Natural killer cell (primary cell): ENCODE measurements at regions of chr1 and their contacts with region 1.

Region 1: GRCh38 chr1:160755911-160756848 is 17.1 kb downstream of the SLAMF7 start:
- DNase-seq: peak; percentile 50 to 81
- ATAC-seq: peak; percentile 72 to 87 (median 85)
- H3K4me3 ChIP-seq: no peak overlapping the region
- H3K4me3 Mint-ChIP-seq: peak overlapping the region; percentile 65
- H3K27ac ChIP-seq: peak overlapping the region; percentile 93
- H3K27ac Mint-ChIP-seq: peak overlapping the region; percentile 95 to 96
- H3K4me1 ChIP-seq: peaks cover 57% of the 10 kb centered on the region
- H3K4me1 Mint-ChIP-seq: peaks cover 73% of the 10 kb centered on the region in 2 donors
- H3K27me3 ChIP-seq: no peaks in the 10 kb centered on the region
- H3K27me3 Mint-ChIP-seq: no peaks in the 10 kb centered on the region
- CTCF ChIP-seq: no peak

Region 2: GRCh38 chr1:160733898-160734297 is 22.3 kb before region 1 on chr1:
- intact Hi-C with region 1: loop called (anchors 1 kb)
- DNase-seq: peak in 1 of 2 donors; percentile 37
- ATAC-seq: peak in 1 of 3 donors; percentile 37
- H3K4me3 ChIP-seq: no peak overlapping the region
- H3K4me3 Mint-ChIP-seq: peak overlapping the region; percentile 65
- H3K27ac ChIP-seq: peak overlapping the region; percentile 75
- H3K27ac Mint-ChIP-seq: peak overlapping the region; percentile 88 to 96
- H3K4me1 ChIP-seq: peaks cover 10% of the 10 kb centered on the region
- H3K4me1 Mint-ChIP-seq: peaks cover 52 to 68% of the 10 kb centered on the region in 2 donors
- H3K27me3 ChIP-seq: no peaks in the 10 kb centered on the region
- H3K27me3 Mint-ChIP-seq: no peaks in the 10 kb centered on the region
- CTCF ChIP-seq: no peak

Region 3: GRCh38 chr1:160739098-160739511 is 17.1 kb before region 1 on chr1 and contains the start of gene SLAMF7:
- intact Hi-C with region 1: loop called (anchors 1 kb)
- DNase-seq: peak; percentile 63 to 75
- ATAC-seq: peak; percentile 71 to 84 (median 76)
- H3K4me3 ChIP-seq: peak within 1 kb of the TSS; percentile 43
- H3K4me3 Mint-ChIP-seq: peak within 1 kb of the TSS; percentile 88
- H3K27ac ChIP-seq: peak within 1 kb of the TSS; percentile 87
- H3K27ac Mint-ChIP-seq: peak within 1 kb of the TSS; percentile 88 to 96
- H3K4me1 ChIP-seq: peaks cover 43% of the 10 kb centered on the region
- H3K4me1 Mint-ChIP-seq: peaks cover 74 to 91% of the 10 kb centered on the region in 2 donors
- H3K27me3 ChIP-seq: no peaks in the 10 kb centered on the region
- H3K27me3 Mint-ChIP-seq: no peaks in the 10 kb centered on the region
- CTCF ChIP-seq: no peak
- total RNA-seq, gene SLAMF7: 191 to 301 (median 227) TPM

Region 4: GRCh38 chr1:160768295-160768657 is 12.1 kb after region 1 on chr1:
- intact Hi-C with region 1: loop called (anchors 1 kb)
- DNase-seq: peak; percentile 77 to 95
- ATAC-seq: peak; percentile 88 to 98 (median 96)
- H3K4me3 ChIP-seq: peak overlapping the region; percentile 9
- H3K4me3 Mint-ChIP-seq: peak overlapping the region; percentile 97
- H3K27ac ChIP-seq: peak overlapping the region; percentile 83
- H3K27ac Mint-ChIP-seq: peak overlapping the region; percentile 98 to 99
- H3K4me1 ChIP-seq: peaks cover 17% of the 10 kb centered on the region
- H3K4me1 Mint-ChIP-seq: peaks cover 23 to 24% of the 10 kb centered on the region in 2 donors
- H3K27me3 ChIP-seq: no peaks in the 10 kb centered on the region
- H3K27me3 Mint-ChIP-seq: no peaks in the 10 kb centered on the region
- CTCF ChIP-seq: peak; percentile 91

Region 5: GRCh38 chr1:160795951-160796383 is 39.8 kb after region 1 on chr1 and contains the start of gene LY9:
- intact Hi-C with region 1: loop called (anchors 5 kb)
- DNase-seq: peak; percentile 66 to 96
- ATAC-seq: peak; percentile 84 to 93 (median 92)
- H3K4me3 ChIP-seq: peak within 1 kb of the TSS; percentile 39
- H3K4me3 Mint-ChIP-seq: peak within 1 kb of the TSS; percentile 90
- H3K27ac ChIP-seq: peak within 1 kb of the TSS; percentile 94
- H3K27ac Mint-ChIP-seq: peak within 1 kb of the TSS; percentile 91 to 95
- H3K4me1 ChIP-seq: peaks cover 49% of the 10 kb centered on the region
- H3K4me1 Mint-ChIP-seq: peaks cover 59 to 70% of the 10 kb centered on the region in 2 donors
- H3K27me3 ChIP-seq: no peaks in the 10 kb centered on the region
- H3K27me3 Mint-ChIP-seq: no peaks in the 10 kb centered on the region
- CTCF ChIP-seq: no peak
- total RNA-seq, gene LY9: 30.3 to 47.1 (median 34.4) TPM

Region 6: GRCh38 chr1:160830321-160831153 is 74.4 kb after region 1 on chr1:
- intact Hi-C with region 1: no loop called
- DNase-seq: peak; percentile 43 to 84
- ATAC-seq: peak; percentile 57 to 75 (median 71)
- H3K4me3 ChIP-seq: no peak overlapping the region
- H3K4me3 Mint-ChIP-seq: no peak overlapping the region
- H3K27ac ChIP-seq: no peak overlapping the region
- H3K27ac Mint-ChIP-seq: peak overlapping the region; percentile 27 to 86
- H3K4me1 ChIP-seq: peaks cover 14% of the 10 kb centered on the region
- H3K4me1 Mint-ChIP-seq: peaks cover 47 to 50% of the 10 kb centered on the region in 2 donors
- H3K27me3 ChIP-seq: no peaks in the 10 kb centered on the region
- H3K27me3 Mint-ChIP-seq: no peaks in the 10 kb centered on the region
- CTCF ChIP-seq: peak; percentile 53

Region 7: GRCh38 chr1:161549652-161550051 is 793.5 kb after region 1 on chr1 and contains the start of gene FCGR3A:
- intact Hi-C with region 1: loop called (anchors 10 kb)
- DNase-seq: peak in 1 of 2 donors; percentile 30
- ATAC-seq: peak; percentile 21 to 49 (median 42)
- H3K4me3 ChIP-seq: peak within 1 kb of the TSS; percentile 40
- H3K4me3 Mint-ChIP-seq: peak within 1 kb of the TSS; percentile 92
- H3K27ac ChIP-seq: peak within 1 kb of the TSS; percentile 74
- H3K27ac Mint-ChIP-seq: peak within 1 kb of the TSS; percentile 97 to 100
- H3K4me1 ChIP-seq: peaks cover 50% of the 10 kb centered on the region
- H3K4me1 Mint-ChIP-seq: peaks cover 52 to 69% of the 10 kb centered on the region in 2 donors
- H3K27me3 ChIP-seq: no peaks in the 10 kb centered on the region
- H3K27me3 Mint-ChIP-seq: no peaks in the 10 kb centered on the region
- CTCF ChIP-seq: no peak
- total RNA-seq, gene FCGR3A: 557 to 892 (median 848) TPM